ENCODE measurements at regions of chr17 and their contacts with region 1.

Region 1: DNA sequence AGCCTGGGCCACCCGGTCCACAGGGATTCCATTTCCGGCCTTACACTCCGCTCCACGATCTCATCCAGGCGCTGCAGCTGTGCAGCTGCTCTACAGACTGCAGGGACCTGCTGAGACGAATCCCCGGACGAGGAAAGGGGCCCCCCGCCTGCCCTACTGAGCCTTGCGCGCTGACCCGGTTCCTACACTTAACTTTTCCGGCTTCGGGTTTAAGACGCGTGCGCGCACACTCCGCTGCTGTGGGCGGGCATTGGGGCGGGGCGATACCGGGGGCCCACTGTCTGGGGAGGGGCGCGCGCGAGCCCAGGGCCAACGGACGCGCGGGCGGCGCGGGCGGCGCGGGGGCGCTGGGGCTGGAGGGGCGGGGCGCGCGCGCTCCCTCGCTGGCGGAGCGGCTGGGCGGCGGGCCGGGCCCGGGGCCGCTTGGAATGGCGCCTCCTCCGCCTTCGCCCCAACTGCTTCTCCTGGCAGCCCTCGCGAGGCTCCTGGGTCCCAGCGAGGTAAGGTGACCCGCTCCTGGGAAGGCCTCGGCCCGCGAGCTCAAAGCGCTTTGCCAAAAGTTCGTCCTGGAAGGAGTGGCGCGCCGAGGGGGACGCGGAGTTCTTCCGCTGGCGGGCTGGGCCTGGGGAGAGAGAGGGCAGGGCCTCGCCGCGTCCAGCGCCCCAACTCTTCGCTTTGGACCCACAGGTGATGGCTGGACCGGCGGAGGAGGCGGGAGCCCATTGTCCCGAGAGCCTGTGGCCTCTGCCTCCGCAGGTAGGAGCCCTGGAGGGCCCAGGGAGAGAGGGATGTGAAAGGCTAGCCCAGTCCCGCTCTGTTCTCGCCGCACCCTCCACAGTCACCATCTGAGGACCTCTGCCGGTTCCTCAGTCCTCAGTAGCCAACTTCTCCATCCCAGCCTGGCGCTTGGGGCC is at the start of gene TP53I13:
- DNase-seq: peak; percentile 78
- H3K4me3 Mint-ChIP-seq: peak within 1 kb of the TSS; percentile 80
- H3K27ac Mint-ChIP-seq: peak within 1 kb of the TSS; percentile 78
- H3K4me1 Mint-ChIP-seq: peaks cover 14% of the 10 kb centered on the region
- H3K27me3 Mint-ChIP-seq: no peaks in the 10 kb centered on the region
- CTCF ChIP-seq: no peak
- total RNA-seq, gene TP53I13: 29.6 and 34.5 TPM in 2 replicates

Region 2: GRCh38 chr17:29510953-29511352 is 57.6 kb before region 1 on chr17:
- CTCF ChIA-PET with region 1: no interaction called
- POLR2A ChIA-PET with region 1: no interaction called
- intact Hi-C with region 1: no loop called
- DNase-seq: no peak
- H3K4me3 Mint-ChIP-seq: no peak overlapping the region
- H3K27ac Mint-ChIP-seq: no peak overlapping the region
- H3K4me1 Mint-ChIP-seq: no peaks in the 10 kb centered on the region
- H3K27me3 Mint-ChIP-seq: no peaks in the 10 kb centered on the region
- CTCF ChIP-seq: no peak

Region 3: DNA sequence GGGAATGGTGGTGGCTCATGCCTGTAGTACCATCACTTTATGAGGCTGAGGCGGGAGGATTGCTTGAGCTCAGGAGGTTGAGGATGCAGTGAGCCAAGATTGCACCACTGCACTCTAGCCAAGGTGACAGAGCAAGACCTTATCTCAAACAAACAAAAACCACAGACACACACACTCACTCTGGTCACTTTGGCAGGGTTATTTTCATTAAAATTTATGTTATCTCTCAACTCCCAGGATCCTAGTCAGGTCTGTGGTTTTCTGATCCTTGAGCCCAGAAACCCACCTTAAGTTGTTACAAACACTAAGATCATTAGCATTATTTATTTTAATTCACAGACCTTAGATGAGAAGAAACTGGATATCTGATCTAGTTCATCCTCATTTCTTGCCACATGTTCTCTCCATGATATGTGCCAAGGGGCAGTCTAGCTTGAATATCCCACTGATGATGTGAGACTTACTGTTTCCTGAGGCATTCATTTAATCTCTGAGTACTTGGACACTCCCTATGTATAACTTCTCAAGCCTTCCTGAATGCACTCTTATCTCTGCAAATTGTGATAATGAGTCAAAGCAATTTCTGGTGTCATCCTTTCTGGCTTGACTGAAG is 11.4 kb before region 1 on chr17:
- CTCF ChIA-PET with region 1: interaction called, 3 read pairs
- POLR2A ChIA-PET with region 1: interaction called, 23 read pairs
- intact Hi-C with region 1: no loop called
- DNase-seq: no peak
- H3K4me3 Mint-ChIP-seq: no peak overlapping the region
- H3K27ac Mint-ChIP-seq: no peak overlapping the region
- H3K4me1 Mint-ChIP-seq: no peaks in the 10 kb centered on the region
- H3K27me3 Mint-ChIP-seq: no peaks in the 10 kb centered on the region
- CTCF ChIP-seq: no peak

Measured in MCF 10A (cell line).